ENCODE measurements at regions of chr16 and their contacts with region 1.

Region 1: GRCh38 chr16:15434425-15435215 is at the start of gene BMERB1:
- DNase-seq: peak; percentile 95
- total RNA-seq, gene BMERB1: 63.6 to 64.0 TPM

Region 2: DNA sequence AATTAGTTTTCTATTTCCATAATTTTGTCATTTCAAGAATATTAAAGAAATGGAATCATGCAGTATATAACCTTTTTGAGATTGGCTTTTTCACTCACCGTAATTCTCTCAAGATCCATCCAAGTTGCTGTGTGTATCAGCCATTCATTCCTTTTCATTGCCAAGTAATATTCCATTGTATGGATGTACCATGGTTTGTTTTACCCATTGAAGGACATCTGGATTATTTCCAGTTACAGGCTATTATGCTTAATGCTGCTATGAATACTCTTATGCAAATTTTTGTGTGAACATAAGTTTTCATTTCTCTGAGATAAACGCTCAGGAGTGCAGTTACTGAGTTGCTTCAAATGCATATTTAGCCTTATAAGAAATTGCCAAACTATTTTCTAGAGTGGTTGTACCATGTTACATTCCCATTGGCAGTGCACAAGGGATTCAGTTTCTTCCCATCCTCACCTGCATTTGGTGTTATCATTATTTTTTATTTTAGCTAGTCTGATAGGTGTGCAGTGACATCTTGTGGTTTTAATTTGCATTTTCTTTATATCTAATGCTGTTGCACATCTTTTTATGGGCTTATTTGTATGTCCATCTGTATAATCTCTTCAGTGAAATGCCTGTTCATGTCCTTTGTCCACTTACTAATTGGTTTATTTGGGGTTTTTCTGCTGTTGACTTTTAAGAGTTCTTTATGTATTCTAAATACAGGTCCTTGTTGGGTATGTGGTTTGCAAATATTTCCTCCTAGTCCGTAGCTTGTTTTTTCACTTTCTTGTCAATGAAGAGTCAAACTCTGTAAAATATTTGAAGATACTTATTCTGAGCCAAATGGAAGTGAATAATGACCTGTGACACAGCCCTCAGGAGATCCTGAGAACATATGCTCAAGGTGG is 32.5 kb after region 1 on chr16:
- intact Hi-C with region 1: no loop called
- DNase-seq: no peak

Region 3: GRCh38 chr16:15493466-15494150 is 59.0 kb after region 1 on chr16:
- intact Hi-C with region 1: loop called in 1 of 2 experiments (anchors 5 kb)
- DNase-seq: no peak

Region 4: GRCh38 chr16:15548482-15548891 is 113.9 kb after region 1 on chr16:
- intact Hi-C with region 1: loop called (anchors 5 kb)
- DNase-seq: no peak

Region 5: GRCh38 chr16:15553313-15554088 is 118.9 kb after region 1 on chr16:
- intact Hi-C with region 1: loop called (anchors 5 kb)
- DNase-seq: no peak

Measured in posterior vena cava (tissue), 2 donors.